ENCODE measurements at regions of chr17 and their contacts with region 1.

Region 1: DNA sequence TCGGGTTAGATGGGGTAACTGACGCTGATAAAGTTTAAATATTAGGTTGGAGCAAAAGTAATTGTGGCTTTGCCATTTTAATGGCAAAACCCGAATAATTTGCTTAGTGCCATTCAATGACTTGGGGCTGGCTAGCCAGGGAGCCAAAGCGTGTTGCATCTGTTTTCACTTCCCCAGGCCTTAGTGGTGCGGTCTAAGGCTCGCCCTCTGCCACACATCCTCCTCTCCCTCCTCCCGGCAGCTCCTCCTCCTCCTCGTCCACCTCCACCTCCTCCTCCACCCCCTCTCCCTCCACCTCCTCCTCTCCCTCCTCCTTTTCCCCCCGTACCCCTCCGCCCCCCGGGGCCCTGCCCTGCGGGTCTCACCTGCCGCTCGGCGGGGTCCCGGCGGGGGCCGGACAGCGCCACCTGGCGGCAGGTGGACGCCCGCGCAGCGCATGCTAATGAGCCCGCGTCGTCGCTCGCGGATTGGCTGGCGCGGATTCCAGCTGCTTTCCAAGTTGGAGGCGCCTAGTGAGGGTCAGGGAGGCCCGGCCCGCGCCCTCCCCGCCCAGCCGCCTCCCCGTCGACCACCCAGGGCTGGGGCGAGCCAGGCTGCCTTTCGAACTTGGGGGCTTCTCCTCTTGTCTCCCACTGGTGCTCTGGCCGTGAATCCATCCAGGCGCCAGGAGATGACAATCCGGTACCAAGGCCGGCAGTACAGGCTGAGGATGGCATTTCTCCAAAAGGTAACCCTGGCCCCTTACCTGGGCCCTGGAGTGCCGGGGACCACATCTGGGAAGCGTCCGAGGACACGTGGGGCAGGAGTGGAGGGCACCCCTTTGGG is 36.6 kb upstream of the RGS9 start:
- DNase-seq: peak; percentile 81 to 90
- H3K4me3 ChIP-seq: peak overlapping the region; percentile 56 to 57
- H3K27ac ChIP-seq: peak overlapping the region; percentile 57 to 70
- H3K4me1 ChIP-seq: peaks cover 0 to 12% (median 8%) of the 10 kb centered on the region in 4 donors
- H3K27me3 ChIP-seq: no peaks in the 10 kb centered on the region
- CTCF ChIP-seq: peak; percentile 86 to 94

Region 2: GRCh38 chr17:64975329-64976087 is 125.0 kb before region 1 on chr17:
- intact Hi-C with region 1: loop called (anchors 10 kb)
- DNase-seq: peak; percentile 91 to 97
- H3K4me3 ChIP-seq: peak overlapping the region; percentile 80 to 95
- H3K27ac ChIP-seq: peak overlapping the region; percentile 99
- H3K4me1 ChIP-seq: peaks cover 0 to 20% (median 12%) of the 10 kb centered on the region in 4 donors
- H3K27me3 ChIP-seq: no peaks in the 10 kb centered on the region
- CTCF ChIP-seq: peak in 1 of 2 experiments; percentile 19

Region 3: GRCh38 chr17:65055348-65056261 is 44.9 kb before region 1 on chr17:
- intact Hi-C with region 1: loop called (anchors 5 kb)
- DNase-seq: peak; percentile 79 to 87
- H3K4me3 ChIP-seq: peak overlapping the region; percentile 97 to 98
- H3K27ac ChIP-seq: peak overlapping the region; percentile 98
- H3K4me1 ChIP-seq: peaks cover 0 to 46% (median 27%) of the 10 kb centered on the region in 4 donors
- H3K27me3 ChIP-seq: no peaks in the 10 kb centered on the region
- CTCF ChIP-seq: peak in 1 of 2 experiments; percentile 11